BJ (cell line): ENCODE measurements at regions of chr17 and their contacts with region 1.

Region 1: GRCh38 chr17:59331129-59331928 is at the start of gene YPEL2:
- DNase-seq: peak; percentile 40
- H3K4me3 ChIP-seq: peak within 1 kb of the TSS; percentile 94
- H3K27me3 ChIP-seq: peaks cover 6% of the 10 kb centered on the region
- CTCF ChIP-seq: no peak
- polyA plus RNA-seq, gene YPEL2: 8.4 and 9.2 TPM in 2 replicates

Region 2: GRCh38 chr17:59296771-59297500 is 34.4 kb before region 1 on chr17:
- CTCF ChIA-PET with region 1: no interaction called
- POLR2A ChIA-PET with region 1: no interaction called
- DNase-seq: no peak
- H3K4me3 ChIP-seq: no peak overlapping the region
- H3K27me3 ChIP-seq: peaks cover 1% of the 10 kb centered on the region
- CTCF ChIP-seq: no peak

Region 3: DNA sequence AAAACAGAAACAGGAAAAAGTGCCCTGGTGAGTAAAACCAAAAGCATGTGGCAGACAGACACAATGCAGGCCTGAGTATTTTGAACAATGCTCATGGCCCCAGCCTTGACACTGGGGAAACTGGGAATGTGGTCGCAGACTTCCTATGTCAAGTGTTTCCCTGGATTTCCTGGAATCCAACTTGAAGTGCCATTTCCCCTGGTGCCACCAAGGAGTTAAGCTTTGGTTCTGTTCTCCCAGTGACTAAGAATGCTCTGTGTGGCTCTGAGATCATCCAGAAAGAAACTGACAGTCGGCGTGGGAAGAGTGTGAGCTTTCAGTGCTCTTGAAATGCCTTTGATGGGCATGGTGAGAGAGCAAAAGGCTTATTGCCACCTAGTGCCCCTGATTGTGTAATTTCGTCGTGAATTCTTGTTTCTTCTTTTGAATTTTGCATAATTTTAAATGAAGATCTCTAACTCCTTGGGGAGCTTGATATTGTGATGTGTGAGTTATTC is 96.1 kb after region 1 on chr17:
- CTCF ChIA-PET with region 1: interaction called, 10 read pairs
- POLR2A ChIA-PET with region 1: no interaction called
- DNase-seq: no peak
- H3K4me3 ChIP-seq: no peak overlapping the region
- H3K27me3 ChIP-seq: no peaks in the 10 kb centered on the region
- CTCF ChIP-seq: no peak

Region 4: DNA sequence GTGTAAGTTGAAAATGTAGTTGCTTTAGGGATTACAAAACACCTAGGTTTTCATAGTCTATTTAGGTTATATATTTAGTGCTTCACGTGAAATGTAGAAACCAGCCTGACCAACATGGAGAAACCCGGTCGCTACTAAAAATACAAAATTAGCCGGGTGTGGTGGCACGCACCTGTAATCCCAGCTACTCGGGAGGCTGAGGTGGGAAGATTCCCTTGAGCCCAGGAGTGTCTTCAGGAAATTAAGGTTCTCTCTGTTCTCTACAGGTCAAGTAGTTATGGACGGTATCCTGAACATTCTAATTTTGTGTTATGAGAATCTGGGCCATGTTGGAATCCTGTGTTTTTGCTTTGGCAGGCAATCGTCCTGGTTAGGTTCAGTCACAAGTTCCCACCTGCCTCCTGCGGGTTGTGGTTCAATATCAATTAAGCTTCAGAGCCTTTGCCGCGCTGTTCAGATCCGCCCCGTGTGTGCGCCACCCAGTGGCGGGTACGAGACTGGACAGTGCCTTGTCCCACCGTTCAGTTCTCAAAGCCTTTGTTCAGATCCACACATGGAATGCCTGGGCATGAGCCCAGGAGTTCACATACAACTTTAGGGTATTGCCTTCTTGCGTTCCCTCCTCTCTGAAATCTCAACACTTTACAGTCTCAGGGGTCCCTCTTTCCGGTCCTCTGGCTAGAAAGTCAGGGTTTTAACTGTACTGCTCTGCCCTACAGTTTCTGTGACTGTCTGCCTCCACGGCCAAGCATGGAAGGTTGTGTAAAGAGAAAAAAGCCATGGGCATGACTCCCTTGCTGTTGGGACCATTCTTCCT is 705.7 kb after region 1 on chr17:
- CTCF ChIA-PET with region 1: no interaction called
- POLR2A ChIA-PET with region 1: no interaction called
- DNase-seq: peak; percentile 14
- H3K4me3 ChIP-seq: no peak overlapping the region
- H3K27me3 ChIP-seq: peaks cover 3% of the 10 kb centered on the region
- CTCF ChIP-seq: peak; percentile 98